ENCODE measurements at regions of chr11 and their contacts with region 1.

Region 1: GRCh38 chr11:74506823-74507222 is 13.3 kb upstream of the LIPT2 start:
- DNase-seq: no peak
- ATAC-seq: no peak
- H3K4me3 ChIP-seq: no peak overlapping the region
- H3K27ac ChIP-seq: no peak overlapping the region
- H3K4me1 ChIP-seq: peaks cover 4% of the 10 kb centered on the region; the same call in 1 of the 2 replicates
- H3K27me3 ChIP-seq: 0 out of 2 replicates have a peak, but pooled peaks cover under 1% of the 10 kb centered on the region
- CTCF ChIP-seq: no peak

Region 2: GRCh38 chr11:74237541-74237940 is 269.3 kb before region 1 on chr11:
- CTCF ChIA-PET with region 1: no interaction called
- POLR2A ChIA-PET with region 1: interaction called, 12 read pairs
- in situ Hi-C with region 1: no loop called
- intact Hi-C with region 1: no loop called
- DNase-seq: no peak
- ATAC-seq: no peak
- H3K4me3 ChIP-seq: no peak overlapping the region
- H3K27ac ChIP-seq: no peak overlapping the region
- H3K4me1 ChIP-seq: no peaks in the 10 kb centered on the region
- H3K27me3 ChIP-seq: no peaks in the 10 kb centered on the region
- CTCF ChIP-seq: no peak

Region 3: GRCh38 chr11:74520927-74521665 is 14.3 kb after region 1 on chr11:
- CTCF ChIA-PET with region 1: no interaction called
- POLR2A ChIA-PET with region 1: no interaction called
- in situ Hi-C with region 1: no loop called
- intact Hi-C with region 1: no loop called
- DNase-seq: no peak
- ATAC-seq: no peak
- H3K4me3 ChIP-seq: no peak overlapping the region
- H3K27ac ChIP-seq: no peak overlapping the region
- H3K4me1 ChIP-seq: peaks cover 4% of the 10 kb centered on the region; the same call in 1 of the 2 replicates
- H3K27me3 ChIP-seq: no peaks in the 10 kb centered on the region
- CTCF ChIP-seq: no peak

Measured in Panc1 (cell line).